ENCODE measurements at regions of chr15 and their contacts with region 1.

Region 1: GRCh38 chr15:29844284-29844913 is 22.1 kb upstream of the TJP1 start:
- DNase-seq: peak; percentile 95
- ATAC-seq: peak; percentile 43
- H3K4me3 ChIP-seq: peak overlapping the region; percentile 29; the same call in 1 of the 2 replicates
- H3K27ac ChIP-seq: peak overlapping the region; percentile 83
- H3K4me1 ChIP-seq: peaks cover 41% of the 10 kb centered on the region
- H3K27me3 ChIP-seq: no peaks in the 10 kb centered on the region
- CTCF ChIP-seq: no peak

Region 2: DNA sequence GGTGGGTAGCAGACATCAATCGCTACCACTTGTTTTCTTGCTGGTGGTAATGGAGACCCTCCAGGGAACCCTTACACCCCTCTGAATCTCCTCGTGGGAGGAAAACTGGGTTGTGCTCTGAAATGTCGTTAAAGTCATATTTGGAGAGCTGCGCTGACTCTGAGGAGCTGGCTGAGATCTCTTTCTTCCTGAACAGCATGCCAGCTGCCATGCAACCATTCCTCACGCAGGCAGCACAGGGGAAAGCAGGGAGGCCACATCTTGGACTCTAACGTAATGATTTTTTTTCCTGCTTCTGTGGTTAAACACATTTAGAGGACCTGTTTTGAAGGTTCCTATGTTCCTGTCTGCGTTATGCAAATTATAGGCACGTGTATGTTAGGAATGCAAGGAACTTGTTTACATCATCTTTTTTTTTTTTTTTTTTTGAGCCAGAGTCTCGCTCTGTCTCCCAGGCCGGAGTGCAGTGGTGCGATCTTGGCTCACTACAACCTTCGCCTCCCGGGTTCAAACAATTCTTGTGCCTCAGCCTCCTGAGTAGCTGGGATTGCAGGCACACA is 178.9 kb before region 1 on chr15:
- CTCF ChIA-PET with region 1: no interaction called
- POLR2A ChIA-PET with region 1: no interaction called
- intact Hi-C with region 1: no loop called
- DNase-seq: no peak
- ATAC-seq: no peak
- H3K4me3 ChIP-seq: no peak overlapping the region
- H3K27ac ChIP-seq: no peak overlapping the region
- H3K4me1 ChIP-seq: peaks cover 14% of the 10 kb centered on the region
- H3K27me3 ChIP-seq: no peaks in the 10 kb centered on the region
- CTCF ChIP-seq: no peak

Region 3: DNA sequence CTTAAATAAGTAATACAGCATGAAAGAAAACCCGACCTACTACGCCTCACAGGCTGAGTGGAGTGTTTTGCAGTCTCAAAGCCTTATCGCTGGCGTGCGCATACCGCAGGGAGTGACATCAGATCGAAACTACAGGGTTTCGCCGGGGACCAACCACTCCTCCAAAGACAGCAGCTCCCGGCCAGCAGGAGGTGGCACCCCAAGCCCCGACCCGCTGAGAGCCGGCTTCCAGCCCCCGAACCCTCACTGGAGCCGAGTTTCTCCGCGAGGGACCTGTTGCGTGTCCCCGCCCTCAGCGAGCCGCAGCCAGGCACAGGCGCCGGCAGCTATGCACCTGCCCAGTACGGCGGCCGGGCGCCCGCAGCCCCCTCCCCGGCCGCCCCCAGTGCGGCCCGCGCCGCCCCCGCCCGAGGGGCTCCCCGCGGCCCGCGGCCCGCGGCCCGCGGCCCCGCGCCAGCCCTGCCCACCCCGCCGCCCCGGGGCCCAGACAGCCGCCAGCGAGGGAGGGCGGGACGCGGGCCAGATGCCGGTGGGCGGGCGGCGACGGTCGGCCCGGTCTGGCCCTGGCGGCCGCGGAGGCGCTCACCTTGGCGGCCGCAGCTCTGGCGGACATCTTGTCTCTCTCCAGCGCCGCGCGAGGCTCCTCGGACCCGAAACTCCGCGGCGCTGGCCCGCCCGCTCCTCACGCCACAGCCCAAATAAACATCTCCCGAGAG is 22.8 kb before region 1 on chr15:
- CTCF ChIA-PET with region 1: no interaction called
- POLR2A ChIA-PET with region 1: no interaction called
- intact Hi-C with region 1: loop called (anchors 1 kb)
- DNase-seq: peak; percentile 84
- ATAC-seq: peak; percentile 52
- H3K4me3 ChIP-seq: peak overlapping the region; percentile 95
- H3K27ac ChIP-seq: peak overlapping the region; percentile 88
- H3K4me1 ChIP-seq: peaks cover 34% of the 10 kb centered on the region
- H3K27me3 ChIP-seq: no peaks in the 10 kb centered on the region
- CTCF ChIP-seq: 0 out of 2 replicates have a peak, but pooled peaks have one; percentile 16

Region 4: DNA sequence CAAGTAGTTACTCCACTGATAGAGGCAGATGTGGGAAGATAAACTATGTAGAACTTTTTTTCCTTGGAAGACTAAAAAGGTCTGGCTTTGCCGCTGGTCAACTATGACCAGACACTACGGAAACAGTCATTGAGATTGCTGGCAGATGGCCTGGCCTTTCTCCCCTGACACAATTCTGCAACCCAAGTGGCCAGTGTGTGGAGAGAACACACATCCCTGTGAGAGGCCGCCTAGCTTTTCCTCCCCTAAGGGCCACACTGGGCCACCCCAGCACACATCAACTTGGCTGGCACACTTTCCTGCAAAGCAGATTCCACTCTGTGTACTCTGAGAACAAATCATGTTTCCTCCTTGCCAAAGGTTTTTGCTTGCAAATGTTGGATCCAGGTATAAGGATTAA is 11.7 kb before region 1 on chr15:
- CTCF ChIA-PET with region 1: no interaction called
- POLR2A ChIA-PET with region 1: no interaction called
- intact Hi-C with region 1: no loop called
- DNase-seq: no peak
- ATAC-seq: no peak
- H3K4me3 ChIP-seq: no peak overlapping the region
- H3K27ac ChIP-seq: no peak overlapping the region
- H3K4me1 ChIP-seq: peaks cover 13% of the 10 kb centered on the region
- H3K27me3 ChIP-seq: no peaks in the 10 kb centered on the region
- CTCF ChIP-seq: no peak

Region 5: DNA sequence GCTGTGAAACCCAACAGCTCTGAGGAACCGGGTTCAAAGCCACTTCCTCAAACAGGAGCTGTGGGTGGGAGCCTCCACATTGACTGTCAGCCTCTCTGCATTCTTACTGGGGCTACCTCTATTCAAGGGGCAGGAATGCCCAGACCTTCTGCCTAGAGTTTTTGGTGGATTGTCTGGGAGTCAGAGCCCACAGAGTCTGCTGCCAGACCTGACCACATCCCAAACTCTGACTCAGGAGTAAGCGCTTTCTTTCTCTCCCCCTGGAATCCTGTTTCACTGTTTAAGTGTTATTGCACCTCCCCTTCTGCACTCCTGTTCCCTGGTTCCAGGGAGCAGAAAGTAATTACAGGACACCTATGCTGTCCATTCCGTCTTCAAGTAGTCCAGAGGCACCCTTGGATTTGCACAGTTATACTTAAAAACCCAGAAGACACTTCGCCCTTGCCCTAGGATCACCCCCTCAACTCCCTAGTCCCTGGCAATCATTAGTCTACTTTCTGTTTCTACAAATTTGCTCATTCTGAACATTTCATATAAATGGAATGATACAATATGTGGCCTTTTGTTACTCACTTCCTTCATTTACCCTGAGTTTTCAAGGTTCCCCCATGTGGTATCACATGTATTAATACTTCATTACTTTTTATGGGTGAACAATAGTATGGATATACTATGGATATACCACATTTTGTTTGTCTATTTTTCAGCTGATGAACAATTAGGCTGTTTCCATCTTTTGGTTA is 15.7 kb after region 1 on chr15:
- CTCF ChIA-PET with region 1: no interaction called
- POLR2A ChIA-PET with region 1: no interaction called
- intact Hi-C with region 1: loop called (anchors 2 kb)
- DNase-seq: peak; percentile 78
- ATAC-seq: peak; percentile 95
- H3K4me3 ChIP-seq: no peak overlapping the region
- H3K27ac ChIP-seq: peak overlapping the region; percentile 29
- H3K4me1 ChIP-seq: peaks cover 22% of the 10 kb centered on the region
- H3K27me3 ChIP-seq: no peaks in the 10 kb centered on the region
- CTCF ChIP-seq: no peak

Region 6: GRCh38 chr15:29870495-29871151 is 26.2 kb after region 1 on chr15:
- CTCF ChIA-PET with region 1: no interaction called
- POLR2A ChIA-PET with region 1: no interaction called
- intact Hi-C with region 1: no loop called
- DNase-seq: no peak
- ATAC-seq: no peak
- H3K4me3 ChIP-seq: no peak overlapping the region
- H3K27ac ChIP-seq: no peak overlapping the region
- H3K4me1 ChIP-seq: no peaks in the 10 kb centered on the region
- H3K27me3 ChIP-seq: no peaks in the 10 kb centered on the region
- CTCF ChIP-seq: no peak

Measured in PC-3 (cell line).